ENCODE measurements at regions of chrX and their contacts with region 1.

Region 1: DNA sequence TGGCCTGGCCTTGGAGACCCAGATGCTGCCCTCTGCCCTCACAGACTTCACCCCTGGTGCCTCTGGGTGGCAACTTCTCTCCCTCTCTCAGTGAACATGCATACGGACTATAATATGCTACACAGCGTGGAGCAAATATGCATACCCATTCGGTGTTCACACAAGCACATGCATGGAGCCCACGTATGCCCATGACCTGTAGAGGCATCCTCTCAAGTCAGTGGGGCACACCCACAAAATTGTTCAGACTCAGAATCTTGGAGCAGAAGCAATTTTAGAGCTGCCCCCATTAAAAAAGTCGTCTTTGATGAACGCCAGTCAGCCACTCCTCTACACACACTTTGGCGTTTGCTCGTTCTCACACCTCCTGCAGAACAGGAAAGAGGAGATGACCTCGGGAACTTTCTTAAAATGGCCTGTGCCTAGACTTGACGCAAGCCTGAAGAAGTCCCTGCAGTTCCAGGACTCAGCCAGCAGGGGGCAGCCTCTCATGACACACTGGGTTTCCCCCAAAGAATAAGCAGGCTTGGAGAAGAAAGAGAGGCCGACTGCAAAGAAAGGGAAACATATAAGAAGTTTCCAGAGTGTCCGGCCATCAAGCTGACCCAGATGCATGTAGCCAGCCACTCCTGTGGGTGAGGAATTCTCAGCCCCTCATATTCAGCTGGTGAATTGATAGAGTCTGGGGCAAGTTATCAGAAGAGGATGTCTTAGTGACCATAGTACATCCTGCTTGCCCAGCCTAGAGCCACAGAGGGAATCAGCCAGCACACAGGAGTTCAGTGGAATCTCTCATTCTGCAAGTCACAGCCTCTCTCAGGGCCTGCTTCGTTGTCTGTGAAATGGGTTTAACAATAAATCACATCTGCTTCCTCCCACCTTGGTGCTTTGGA is 17.3 kb downstream of the APLN start:
- DNase-seq: peak; percentile 77
- ATAC-seq: peak; percentile 62

Region 2: DNA sequence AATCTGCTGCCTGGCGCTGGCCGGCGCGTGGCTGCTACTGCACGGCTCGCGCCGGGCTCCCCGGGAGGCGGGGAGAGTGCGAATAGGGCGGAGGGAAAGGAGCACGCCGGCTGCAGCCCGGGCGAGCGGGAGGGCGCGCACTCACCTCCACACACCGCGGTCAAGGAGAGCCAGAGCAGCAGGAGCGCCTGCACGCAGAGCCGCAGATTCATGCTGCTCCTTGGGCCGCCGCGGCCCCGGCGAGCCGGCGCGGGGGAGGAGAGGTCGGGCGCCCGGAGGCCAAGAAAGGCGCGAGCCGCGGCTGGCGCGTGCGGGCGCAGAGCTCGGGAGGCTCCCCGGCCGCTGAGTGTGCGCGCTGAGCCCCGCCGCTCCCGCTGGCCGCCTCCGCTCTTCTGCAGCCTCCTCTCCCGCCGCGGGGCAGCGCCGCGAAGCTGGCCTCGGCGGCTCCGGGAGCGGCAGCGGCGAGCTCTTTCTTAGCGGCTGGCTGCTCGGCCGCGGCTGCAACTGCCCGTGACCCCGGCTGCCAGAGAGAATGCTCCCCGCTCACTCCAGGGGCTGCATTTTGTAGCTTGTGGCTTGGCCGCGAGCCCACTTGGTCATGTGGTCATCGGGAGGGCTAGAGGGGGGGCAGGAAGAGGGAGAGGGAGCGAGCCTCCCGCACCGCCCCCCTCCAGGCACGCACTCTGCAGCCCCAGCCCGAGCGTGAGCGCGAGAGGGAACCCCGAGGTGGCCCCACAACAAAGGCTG is 17.1 kb after region 1 on chrX and contains the start of gene APLN:
- intact Hi-C with region 1: no loop called
- DNase-seq: peak; percentile 62
- ATAC-seq: peak; percentile 67
- total RNA-seq, gene APLN: 16.8 TPM

Region 3: DNA sequence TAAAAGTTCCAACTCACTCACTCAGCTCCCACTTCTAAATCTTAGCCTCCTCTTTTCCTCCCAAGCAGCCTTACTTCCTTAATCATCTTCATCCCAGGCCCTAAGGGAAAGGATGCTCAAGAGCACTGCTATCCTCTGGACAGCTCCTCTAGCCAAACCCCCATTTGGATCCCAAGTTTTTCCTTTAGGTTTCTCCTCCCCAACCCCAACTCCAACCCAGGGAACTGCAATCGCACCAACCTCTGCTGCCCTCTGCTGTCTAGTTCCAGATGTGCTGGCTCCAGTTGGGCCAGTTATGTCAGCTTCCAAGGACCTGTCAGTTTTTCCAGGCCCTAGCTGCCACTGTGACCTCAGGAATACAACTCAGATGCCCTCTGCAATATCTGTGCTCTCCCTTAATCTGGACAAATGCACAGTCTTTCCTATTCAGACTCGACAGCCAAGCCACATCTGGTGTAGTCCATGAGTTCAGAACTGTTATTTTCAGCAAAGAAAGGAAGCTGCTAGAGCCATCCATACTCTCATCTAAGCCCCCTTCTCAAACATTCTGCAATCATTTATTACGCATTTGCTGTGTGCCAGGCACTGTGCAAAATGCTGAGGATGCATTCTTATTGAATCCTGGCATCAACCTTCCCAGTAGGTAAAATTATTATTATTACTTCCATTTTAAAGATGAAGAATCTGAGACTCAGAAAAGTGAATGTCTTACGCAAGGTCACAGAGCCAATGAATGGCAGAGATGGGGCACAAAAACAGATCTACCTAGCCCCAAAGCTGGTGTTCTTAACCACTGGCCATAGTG is 89.0 kb after region 1 on chrX:
- intact Hi-C with region 1: loop called (anchors 1 kb)
- DNase-seq: no peak
- ATAC-seq: peak; percentile 83